Esophagus muscularis mucosa (tissue), 4 donors: ENCODE measurements at regions of chr10 and their contacts with region 1.

Region 1: GRCh38 chr10:15719899-15720634 is at the start of gene ITGA8:
- DNase-seq: no peak
- H3K4me3 ChIP-seq: peak within 1 kb of the TSS; percentile 61 to 75 (median 66)
- H3K27ac ChIP-seq: peak within 1 kb of the TSS; percentile 56 to 77 (median 66)
- H3K4me1 ChIP-seq: peaks cover 11 to 48% (median 36%) of the 10 kb centered on the region in 4 donors
- H3K27me3 ChIP-seq: peaks cover 0 to 26% (median 0%) of the 10 kb centered on the region in 4 donors
- CTCF ChIP-seq: peak; percentile 52 to 65 (median 53)
- EP300 ChIP-seq: no peak
- POLR2A ChIP-seq: no peak
- total RNA-seq, gene ITGA8: 26.2 to 113 (median 50.4) TPM

Region 2: DNA sequence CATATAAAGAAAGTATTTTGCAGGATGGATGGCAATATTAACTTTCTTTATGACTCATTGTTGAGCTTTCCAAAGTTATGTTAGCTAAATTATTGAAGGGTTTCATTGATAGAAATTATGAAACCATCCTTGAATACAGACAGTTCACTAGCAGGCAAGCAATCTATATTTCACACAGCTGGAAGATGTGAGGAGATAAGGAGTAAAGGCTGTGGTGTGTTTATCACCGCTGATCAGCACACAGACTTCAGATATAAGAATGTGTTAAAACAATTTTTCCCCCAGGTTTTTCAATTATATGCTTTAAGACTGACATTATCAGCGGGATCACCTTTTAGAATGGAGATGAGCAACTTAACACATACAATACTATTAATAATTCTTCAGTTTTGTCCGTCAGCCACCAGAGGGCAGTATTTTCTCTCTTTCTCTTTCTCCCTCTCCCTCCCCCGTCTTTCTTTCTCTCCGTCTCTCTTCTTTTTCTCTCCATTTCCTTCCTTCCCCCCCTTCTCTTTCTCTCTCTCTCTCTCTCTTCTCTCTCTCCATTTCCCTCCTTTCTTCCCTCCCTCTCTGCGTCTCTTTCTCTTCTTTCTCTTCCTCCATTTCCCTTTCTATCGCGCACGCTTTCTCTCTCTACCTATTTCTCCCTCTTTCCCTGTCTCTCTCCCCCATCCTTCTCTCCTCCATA is 286.1 kb before region 1 on chr10:
- intact Hi-C with region 1: loop called (anchors 5 kb)
- DNase-seq: no peak
- H3K4me3 ChIP-seq: peak overlapping the region; percentile 41 to 49 (median 42)
- H3K27ac ChIP-seq: no peak overlapping the region
- H3K4me1 ChIP-seq: peaks cover 0 to 9% (median 7%) of the 10 kb centered on the region in 4 donors
- H3K27me3 ChIP-seq: no peaks in the 10 kb centered on the region
- CTCF ChIP-seq: peak; percentile 62 to 77 (median 75)
- EP300 ChIP-seq: no peak
- POLR2A ChIP-seq: no peak

Region 3: DNA sequence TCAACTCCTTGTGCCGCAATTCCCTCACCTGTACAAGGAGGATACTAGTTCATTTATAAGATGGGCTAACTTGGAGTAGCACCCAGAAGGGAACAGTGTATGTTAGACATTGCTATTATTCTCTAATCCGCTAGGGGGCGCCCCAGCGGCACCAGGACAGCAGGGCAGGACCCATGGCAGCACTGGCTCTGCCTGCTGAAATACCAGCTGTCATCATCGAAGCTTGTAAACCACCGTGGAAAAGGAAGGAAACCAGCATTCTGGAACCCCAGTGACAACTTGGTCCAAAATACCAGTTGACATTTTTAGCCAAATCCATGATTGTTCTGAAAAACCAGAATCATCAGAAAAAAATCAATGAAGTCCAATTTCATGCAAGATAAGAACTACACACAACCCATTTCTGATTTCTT is 134.8 kb before region 1 on chr10:
- intact Hi-C with region 1: loop called (anchors 5 kb)
- DNase-seq: no peak
- H3K4me3 ChIP-seq: no peak overlapping the region
- H3K27ac ChIP-seq: no peak overlapping the region
- H3K4me1 ChIP-seq: peaks cover 0 to 6% (median 2%) of the 10 kb centered on the region in 4 donors
- H3K27me3 ChIP-seq: no peaks in the 10 kb centered on the region
- CTCF ChIP-seq: peak; percentile 40 to 72 (median 58)
- EP300 ChIP-seq: no peak
- POLR2A ChIP-seq: no peak

Region 4: GRCh38 chr10:15824498-15824897 is 104.4 kb after region 1 on chr10:
- intact Hi-C with region 1: loop called (anchors 5 kb)
- DNase-seq: no peak
- H3K4me3 ChIP-seq: no peak overlapping the region
- H3K27ac ChIP-seq: no peak overlapping the region
- H3K4me1 ChIP-seq: peaks cover 0 to 3% (median under 1%) of the 10 kb centered on the region in 4 donors
- H3K27me3 ChIP-seq: no peaks in the 10 kb centered on the region
- CTCF ChIP-seq: peak; percentile 54 to 67 (median 60)
- EP300 ChIP-seq: no peak
- POLR2A ChIP-seq: no peak